K562 (cell line): ENCODE measurements at regions of chr6 and their contacts with region 1.

Region 1: DNA sequence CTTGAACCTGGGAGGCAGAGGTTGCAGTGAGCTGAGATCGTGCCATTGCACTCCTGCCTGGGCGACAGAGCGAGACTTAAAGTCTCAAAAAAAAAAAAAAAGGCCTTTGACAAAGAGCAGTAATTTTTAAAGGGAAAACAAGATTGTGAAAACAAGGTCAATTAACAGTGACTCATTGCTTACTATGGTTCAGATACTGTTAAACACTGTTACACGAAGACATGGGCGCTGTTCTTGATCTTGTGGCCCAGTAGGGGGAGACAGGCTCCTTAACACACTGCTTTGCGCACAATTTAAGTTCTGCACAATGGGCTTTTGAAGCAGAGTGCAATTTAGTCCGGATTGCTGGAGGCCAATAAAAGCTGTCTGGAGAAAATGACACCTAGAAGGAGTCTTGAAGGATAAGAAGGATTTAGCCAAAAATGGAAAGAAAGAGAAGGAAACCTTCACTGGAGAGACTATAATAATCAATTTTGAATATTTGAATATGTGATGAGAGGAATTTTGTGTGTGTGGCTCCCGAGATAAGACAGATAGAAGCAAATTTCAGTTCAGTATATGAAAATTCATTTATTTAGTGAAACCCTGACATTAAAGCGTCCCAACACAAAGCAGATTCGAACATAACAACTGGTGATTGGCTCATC is 6.0 kb upstream of the LATS1 start:
- DNase-seq: peak; percentile 74 to 89 (median 76)
- ATAC-seq: peak; percentile 86
- H3K4me3 ChIP-seq: no peak overlapping the region
- H3K27ac ChIP-seq: no peak overlapping the region
- H3K4me1 ChIP-seq: peaks cover 10 to 25% of the 10 kb centered on the region in 2 experiments
- H3K27me3 ChIP-seq: no peaks in the 10 kb centered on the region
- CTCF ChIP-seq: peak; percentile 93 to 98 (median 95)
- EP300 ChIP-seq: no peak
- POLR2A ChIP-seq: no peak
- RAD21 ChIP-seq: peak; percentile 90 to 93

Region 2: DNA sequence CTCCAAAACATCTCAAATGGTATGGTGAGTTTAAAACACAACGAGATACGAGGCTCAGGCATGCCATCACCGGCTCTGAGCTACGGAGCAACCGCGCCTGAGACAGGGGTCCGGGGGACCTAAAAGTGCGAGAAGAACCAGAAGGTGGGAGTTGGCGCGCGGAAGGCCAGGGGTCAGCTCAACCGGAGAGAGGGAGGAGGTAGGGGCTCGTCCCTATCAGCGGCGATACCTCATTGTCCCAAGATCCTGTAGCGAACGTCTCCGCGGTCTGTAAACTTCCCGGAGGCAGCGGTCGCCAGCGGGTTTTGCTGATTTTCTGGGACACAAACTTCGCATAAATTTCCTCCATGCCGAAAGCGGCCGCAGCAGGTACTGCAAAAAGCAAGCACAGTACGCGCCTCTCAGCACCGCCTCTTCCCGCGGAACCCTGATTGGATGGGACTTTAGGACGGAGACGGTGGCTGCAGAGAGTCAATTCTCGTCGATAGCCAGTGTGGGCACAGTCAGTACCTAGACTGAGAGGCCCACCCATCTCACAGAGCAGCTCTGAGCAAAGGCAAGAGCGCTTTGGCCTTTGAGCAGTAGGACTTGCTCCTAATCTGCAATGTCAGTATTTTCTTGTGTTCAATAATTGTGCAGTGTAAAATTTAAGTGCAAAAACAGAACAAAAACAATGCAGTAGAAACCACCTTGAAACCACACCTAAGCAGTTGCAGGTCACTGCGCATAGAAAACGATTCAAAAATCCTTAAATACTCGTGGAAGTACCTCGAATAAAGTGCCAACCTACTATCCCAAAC is 22.5 kb after region 1 on chr6 and contains the start of gene NUP43:
- CTCF ChIA-PET with region 1: interaction called, 4 read pairs
- POLR2A ChIA-PET with region 1: interaction called, 8 read pairs
- in situ Hi-C with region 1: no loop called
- intact Hi-C with region 1: loop called (anchors 1 kb)
- DNase-seq: peak; percentile 90 to 99 (median 92)
- ATAC-seq: peak; percentile 69
- H3K4me3 ChIP-seq: peak within 1 kb of the TSS; percentile 69
- H3K27ac ChIP-seq: peak within 1 kb of the TSS; percentile 78
- H3K4me1 ChIP-seq: peaks cover 10 to 19% of the 10 kb centered on the region in 2 experiments
- H3K27me3 ChIP-seq: no peaks in the 10 kb centered on the region
- CTCF ChIP-seq: peak; percentile 61 to 75 (median 71)
- EP300 ChIP-seq: peak; percentile 35; the same call in 1 of the 2 replicates
- POLR2A ChIP-seq: peak; percentile 88
- RAD21 ChIP-seq: peak in 1 of 2 experiments; percentile 18; a peak in 1 of 4 replicates
- polyA plus RNA-seq, gene NUP43: 28.9 to 39.7 TPM

Region 3: DNA sequence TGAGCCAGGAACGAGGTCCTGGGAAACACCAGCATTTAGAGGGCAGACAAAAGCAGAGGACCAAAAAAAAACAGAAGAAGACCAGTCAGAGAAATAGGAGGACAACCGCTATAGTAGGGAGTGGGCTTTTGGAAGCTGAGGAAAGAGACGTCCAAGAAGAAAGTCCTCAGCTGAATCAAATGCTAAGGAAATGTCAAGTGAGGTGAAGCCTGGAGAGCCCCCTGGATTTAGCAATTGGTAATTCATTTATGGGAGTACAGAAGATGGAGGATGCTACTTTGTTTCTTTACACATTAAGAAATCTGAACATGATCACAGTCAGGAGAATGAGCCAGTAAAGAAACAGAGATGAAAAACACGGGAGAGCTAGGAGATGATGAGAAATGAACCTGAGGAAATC is 99.1 kb after region 1 on chr6:
- CTCF ChIA-PET with region 1: interaction called, 3 read pairs
- POLR2A ChIA-PET with region 1: no interaction called
- in situ Hi-C with region 1: loop called (anchors 5 kb)
- intact Hi-C with region 1: loop called (anchors 2 kb)
- DNase-seq: peak in 2 of 4 experiments; percentile 20 to 33
- ATAC-seq: peak; percentile 66
- H3K4me3 ChIP-seq: no peak overlapping the region
- H3K27ac ChIP-seq: no peak overlapping the region
- H3K4me1 ChIP-seq: peaks cover 5 to 10% of the 10 kb centered on the region in 2 experiments; a peak in 4 of 5 replicates
- H3K27me3 ChIP-seq: no peaks in the 10 kb centered on the region
- CTCF ChIP-seq: peak; percentile 50 to 61 (median 58)
- EP300 ChIP-seq: no peak
- POLR2A ChIP-seq: no peak
- RAD21 ChIP-seq: peak in 1 of 2 experiments; percentile 63; a peak in 2 of 4 replicates

Region 4: DNA sequence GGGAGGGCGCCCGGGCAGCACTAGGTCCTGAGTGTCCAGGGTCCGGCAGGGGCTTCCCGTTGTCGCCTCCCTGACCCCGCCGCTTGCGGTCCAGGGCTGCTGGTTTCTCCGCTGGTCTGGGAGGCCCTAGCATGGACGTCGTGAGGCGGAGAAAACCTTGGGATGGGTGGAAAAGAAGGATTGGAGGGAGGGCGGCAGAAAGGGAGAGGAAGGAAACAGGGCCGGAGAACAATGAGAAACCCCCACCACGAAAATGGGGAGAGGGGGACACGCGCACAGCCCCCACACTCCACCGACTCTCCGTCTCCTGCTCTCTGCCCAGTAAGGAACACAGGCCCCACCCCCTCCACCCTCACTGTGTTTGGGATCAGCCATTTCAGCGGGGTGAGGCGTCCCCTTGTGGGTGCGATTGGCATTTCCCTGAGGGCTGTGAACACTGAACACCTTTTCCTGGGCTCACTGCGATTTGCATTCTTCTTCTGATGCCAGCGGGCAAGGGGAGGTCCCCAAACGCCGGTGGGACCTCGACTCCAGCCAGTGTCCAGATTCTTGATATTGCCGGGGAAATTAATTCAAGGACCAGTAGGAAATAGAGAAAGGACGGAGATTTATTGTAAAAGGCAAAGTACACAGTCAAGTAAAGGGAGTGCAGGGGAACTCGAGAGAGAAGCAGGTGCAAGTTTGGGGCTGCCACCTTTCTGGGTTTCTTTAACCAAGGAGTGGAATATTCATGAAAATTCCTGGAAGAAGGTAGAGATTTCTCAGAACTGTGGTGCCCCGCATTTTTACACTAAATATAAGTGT is 202.3 kb after region 1 on chr6:
- CTCF ChIA-PET with region 1: interaction called, 3 read pairs
- POLR2A ChIA-PET with region 1: no interaction called
- in situ Hi-C with region 1: loop called (anchors 10 kb)
- intact Hi-C with region 1: loop called (anchors 5 kb)
- DNase-seq: peak; percentile 75 to 91 (median 82)
- ATAC-seq: peak; percentile 97
- H3K4me3 ChIP-seq: peak overlapping the region; percentile 30
- H3K27ac ChIP-seq: no peak overlapping the region
- H3K4me1 ChIP-seq: peaks cover 0 to 26% of the 10 kb centered on the region in 2 experiments; a peak in 3 of 5 replicates
- H3K27me3 ChIP-seq: peaks cover 21 to 52% of the 10 kb centered on the region in 2 experiments
- CTCF ChIP-seq: peak; percentile 93 to 96 (median 95)
- EP300 ChIP-seq: 0 out of 2 replicates have a peak, but pooled peaks have one; percentile 20
- POLR2A ChIP-seq: no peak
- RAD21 ChIP-seq: peak; percentile 94 to 98

Region 5: DNA sequence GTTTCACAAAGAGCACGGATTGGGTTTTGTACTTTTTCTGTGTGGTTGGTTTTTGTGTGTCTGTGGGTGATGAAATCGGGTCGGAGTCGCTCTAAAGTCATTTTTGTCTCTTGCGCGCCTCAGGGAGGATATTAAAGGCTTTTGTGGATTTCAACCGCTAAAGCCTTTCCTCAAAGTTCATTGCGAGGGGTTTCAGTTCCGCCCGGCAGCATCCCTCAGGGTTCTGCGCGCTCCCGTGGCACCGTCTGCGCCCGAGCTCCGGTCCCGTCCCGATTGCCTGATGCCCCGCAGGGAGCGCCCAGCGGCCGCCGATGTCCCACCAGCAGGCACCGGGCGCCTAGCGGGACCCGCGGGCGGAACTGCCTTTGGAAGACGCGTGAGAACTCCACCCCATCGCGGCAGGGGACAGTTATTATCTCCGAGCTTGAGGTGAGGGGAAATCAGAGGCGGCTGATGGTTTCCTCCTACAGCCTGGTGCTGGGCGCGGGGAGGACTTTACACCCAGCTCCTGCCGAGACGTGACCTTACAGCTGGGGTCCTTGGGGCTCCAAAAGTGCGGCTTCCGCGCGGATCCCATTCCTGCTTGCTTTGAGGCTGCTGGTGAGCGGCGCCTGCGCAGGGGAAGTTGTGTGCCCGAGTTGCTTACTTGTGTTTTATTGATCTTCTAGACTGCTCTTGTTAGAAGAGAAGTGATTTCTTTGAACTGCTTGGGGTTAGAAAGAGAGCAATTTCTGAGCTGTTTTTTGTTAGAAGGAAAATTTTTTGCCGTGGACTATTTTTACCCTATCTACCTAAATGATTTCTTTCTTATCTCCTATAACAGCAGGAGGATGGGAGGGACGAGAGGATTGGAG is 267.0 kb after region 1 on chr6:
- CTCF ChIA-PET with region 1: no interaction called
- POLR2A ChIA-PET with region 1: no interaction called
- in situ Hi-C with region 1: no loop called
- intact Hi-C with region 1: no loop called
- DNase-seq: peak in 1 of 4 experiments; percentile 18
- ATAC-seq: no peak; the same call in 1 of the 3 replicates
- H3K4me3 ChIP-seq: no peak overlapping the region
- H3K27ac ChIP-seq: no peak overlapping the region
- H3K4me1 ChIP-seq: peaks cover 0 to 11% of the 10 kb centered on the region in 2 experiments; a peak in 1 of 5 replicates
- H3K27me3 ChIP-seq: peaks cover 68% of the 10 kb centered on the region in 2 experiments
- CTCF ChIP-seq: no peak
- EP300 ChIP-seq: no peak
- POLR2A ChIP-seq: no peak
- RAD21 ChIP-seq: no peak